ENCODE measurements at regions of chr19 and their contacts with region 1.

Region 1: DNA sequence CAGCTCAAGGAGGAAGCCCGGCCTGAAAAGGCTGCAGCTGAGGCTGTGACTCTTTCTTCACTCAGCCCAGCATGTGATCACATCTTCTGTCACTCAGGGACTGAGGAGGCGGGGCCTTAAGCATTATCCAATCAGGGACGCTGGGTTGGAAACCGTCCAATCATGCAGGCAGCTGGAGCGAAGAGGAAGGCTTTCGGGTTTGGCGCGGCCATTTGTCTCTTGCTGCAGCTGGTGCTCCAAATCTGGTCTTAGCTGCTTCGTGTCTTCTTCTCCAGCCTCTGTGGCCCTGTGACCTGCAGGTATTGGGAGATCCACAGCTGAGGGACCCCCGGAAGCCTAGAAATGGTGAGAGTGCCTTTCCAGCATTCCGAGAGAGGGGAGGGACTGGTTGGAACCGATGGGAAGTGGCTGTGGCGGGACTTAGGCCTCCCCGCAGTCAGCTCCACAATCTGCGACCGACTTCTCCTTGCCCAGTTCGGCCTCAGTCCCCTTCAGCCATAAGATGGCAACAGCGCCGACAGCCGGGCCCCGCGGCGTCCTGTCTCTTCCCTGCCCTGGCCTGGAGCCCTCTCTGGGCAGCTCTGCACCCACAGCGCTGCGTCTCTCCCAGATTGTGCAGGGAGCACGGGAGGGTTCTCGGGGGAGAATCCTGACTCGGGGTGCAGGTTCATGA is at the start of gene ZNF90:
- DNase-seq: peak; percentile 82 to 95
- ATAC-seq: peak; percentile 96 to 99 (median 96)
- H3K4me3 ChIP-seq: peak within 1 kb of the TSS; percentile 51
- H3K4me3 Mint-ChIP-seq: peak within 1 kb of the TSS; percentile 92
- H3K27ac ChIP-seq: no peak within 1 kb of the TSS
- H3K27ac Mint-ChIP-seq: peak within 1 kb of the TSS in 1 of 2 donors; percentile 79
- H3K4me1 ChIP-seq: peaks cover 15% of the 10 kb centered on the region
- H3K4me1 Mint-ChIP-seq: peaks cover 15 to 19% of the 10 kb centered on the region in 2 donors
- H3K27me3 ChIP-seq: no peaks in the 10 kb centered on the region
- H3K27me3 Mint-ChIP-seq: no peaks in the 10 kb centered on the region
- CTCF ChIP-seq: no peak
- total RNA-seq, gene ZNF90: 1.6 to 3.2 (median 1.8) TPM

Region 2: DNA sequence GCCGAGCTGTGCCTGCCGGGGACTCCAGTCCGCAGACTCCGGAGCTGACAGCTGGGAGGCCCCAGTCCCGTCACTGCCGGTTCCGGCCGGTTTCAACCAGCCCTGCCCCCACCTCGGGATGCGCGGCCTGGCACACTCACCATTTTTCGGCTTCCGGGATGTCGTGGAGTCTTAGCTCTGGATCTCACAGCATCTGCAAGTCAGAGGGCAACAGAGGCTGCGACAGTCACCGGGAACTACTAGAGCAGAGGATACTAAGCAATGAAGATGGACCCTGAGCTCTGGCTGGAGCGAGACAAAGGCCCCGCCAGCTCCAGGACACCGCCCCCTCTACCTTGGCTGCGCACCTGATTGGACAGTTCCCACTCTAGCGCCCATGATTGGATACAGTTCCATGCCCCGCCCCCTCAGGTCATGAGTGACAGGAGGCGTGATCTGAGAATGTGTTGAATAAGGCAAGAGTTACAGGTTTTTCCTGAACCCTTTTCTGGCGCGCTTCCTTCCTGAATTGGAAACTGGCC is 38.7 kb before region 1 on chr19 and contains the start of gene ZNF682:
- intact Hi-C with region 1: loop called (anchors 1 kb)
- DNase-seq: peak; percentile 94 to 97
- ATAC-seq: peak; percentile 98 to 100 (median 99)
- H3K4me3 ChIP-seq: peak within 1 kb of the TSS; percentile 76
- H3K4me3 Mint-ChIP-seq: peak within 1 kb of the TSS; percentile 96
- H3K27ac ChIP-seq: peak within 1 kb of the TSS; percentile 68
- H3K27ac Mint-ChIP-seq: peak within 1 kb of the TSS; percentile 83 to 97
- H3K4me1 ChIP-seq: peaks cover 13% of the 10 kb centered on the region
- H3K4me1 Mint-ChIP-seq: peaks cover 11% of the 10 kb centered on the region in 2 donors
- H3K27me3 ChIP-seq: no peaks in the 10 kb centered on the region
- H3K27me3 Mint-ChIP-seq: peaks cover 5 to 6% of the 10 kb centered on the region in 2 donors
- CTCF ChIP-seq: no peak
- total RNA-seq, gene ZNF682: 9.6 to 16.1 (median 13.4) TPM

Region 3: GRCh38 chr19:20103091-20103740 is 25.3 kb after region 1 on chr19:
- intact Hi-C with region 1: no loop called
- DNase-seq: no peak
- ATAC-seq: no peak
- H3K4me3 ChIP-seq: no peak overlapping the region
- H3K4me3 Mint-ChIP-seq: no peak overlapping the region
- H3K27ac ChIP-seq: no peak overlapping the region
- H3K27ac Mint-ChIP-seq: no peak overlapping the region
- H3K4me1 ChIP-seq: no peaks in the 10 kb centered on the region
- H3K4me1 Mint-ChIP-seq: no peaks in the 10 kb centered on the region
- H3K27me3 ChIP-seq: no peaks in the 10 kb centered on the region
- H3K27me3 Mint-ChIP-seq: no peaks in the 10 kb centered on the region
- CTCF ChIP-seq: no peak

Region 4: DNA sequence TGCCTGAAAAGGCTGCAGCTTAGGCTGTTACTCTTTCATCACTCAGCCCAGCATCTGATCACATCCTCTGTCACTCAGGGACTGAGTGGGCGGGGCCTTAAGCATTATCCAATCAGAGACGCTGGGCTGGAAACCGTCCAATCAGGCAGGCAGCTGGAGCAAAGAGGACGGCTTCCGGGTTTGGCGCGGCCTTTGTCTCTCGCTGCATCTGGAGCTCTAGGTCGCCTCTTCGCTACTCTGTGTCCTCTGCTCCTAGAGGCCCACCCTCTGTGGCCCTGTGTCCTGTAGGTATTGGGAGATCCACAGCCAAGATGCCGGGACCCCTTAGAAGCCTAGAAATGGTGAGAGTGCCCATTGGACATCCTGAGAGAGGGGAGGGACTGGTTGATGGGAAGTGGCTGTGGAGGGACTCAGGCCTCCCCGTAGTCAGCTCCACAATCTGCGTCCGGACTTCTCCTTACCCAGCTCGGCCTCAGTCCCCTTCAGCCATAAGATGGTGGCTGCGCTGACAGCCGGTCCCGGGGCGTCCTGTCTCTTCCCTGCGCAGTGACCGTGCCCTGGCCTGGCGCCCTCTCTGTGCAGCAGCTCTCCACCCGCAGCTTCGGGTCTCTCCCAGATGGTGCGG is 89.2 kb after region 1 on chr19 and contains the start of gene ZNF486:
- intact Hi-C with region 1: loop called (anchors 5 kb)
- DNase-seq: peak; percentile 94 to 97
- ATAC-seq: peak; percentile 96 to 99 (median 98)
- H3K4me3 ChIP-seq: peak within 1 kb of the TSS; percentile 52
- H3K4me3 Mint-ChIP-seq: peak within 1 kb of the TSS; percentile 94
- H3K27ac ChIP-seq: peak within 1 kb of the TSS; percentile 46
- H3K27ac Mint-ChIP-seq: peak within 1 kb of the TSS; percentile 89 to 94
- H3K4me1 ChIP-seq: peaks cover 14% of the 10 kb centered on the region
- H3K4me1 Mint-ChIP-seq: peaks cover 14 to 36% of the 10 kb centered on the region in 2 donors
- H3K27me3 ChIP-seq: no peaks in the 10 kb centered on the region
- H3K27me3 Mint-ChIP-seq: no peaks in the 10 kb centered on the region
- CTCF ChIP-seq: no peak
- total RNA-seq, gene ZNF486: 3.4 to 6.8 (median 4.8) TPM